Gastrocnemius medialis (tissue), 4 donors: ENCODE measurements at regions of chr4 and their contacts with region 1.

Region 1: DNA sequence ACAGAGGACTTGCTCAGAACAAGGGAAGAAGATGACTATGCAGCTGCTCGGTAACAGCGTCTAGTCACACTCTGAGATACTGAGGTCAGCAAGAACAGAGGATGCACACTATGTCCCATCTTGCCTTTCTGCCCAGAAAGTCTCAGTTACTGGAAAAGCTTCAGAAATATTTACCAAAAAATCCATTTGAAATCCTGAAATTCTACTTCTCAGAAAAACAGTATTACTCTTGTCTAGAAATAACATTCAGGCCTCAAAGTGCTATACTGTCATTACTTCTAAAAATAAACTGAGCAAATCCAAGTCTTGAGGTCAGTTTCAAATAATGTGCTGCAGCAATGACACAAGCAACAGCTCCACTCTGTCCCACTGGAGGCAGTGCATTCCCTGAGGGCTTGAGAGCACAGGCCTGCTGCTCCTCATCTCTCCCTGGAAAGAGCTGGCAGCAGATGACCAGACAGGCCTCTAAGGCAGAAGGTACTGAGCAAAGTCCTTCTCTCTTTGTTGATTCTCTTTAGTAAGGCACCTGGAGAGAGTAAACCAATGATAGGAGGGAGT is 76.9 kb downstream of the CAMK2D start:
- DNase-seq: peak; percentile 61 to 88
- ATAC-seq: peak; percentile 97 to 98
- H3K4me3 ChIP-seq: no peak overlapping the region
- H3K27ac ChIP-seq: peak overlapping the region; percentile 75 to 80 (median 78)
- H3K4me1 ChIP-seq: peaks cover 39 to 50% of the 10 kb centered on the region in 2 donors
- H3K27me3 ChIP-seq: no peaks in the 10 kb centered on the region
- CTCF ChIP-seq: peak; percentile 28 to 73 (median 58)
- POLR2A ChIP-seq: peak in 1 of 2 donors; percentile 20

Region 2: GRCh38 chr4:113179996-113180395 is 504.6 kb before region 1 on chr4:
- in situ Hi-C with region 1: no loop called
- intact Hi-C with region 1: no loop called
- DNase-seq: no peak
- ATAC-seq: peak; percentile 51 to 61
- H3K4me3 ChIP-seq: peak overlapping the region; percentile 9 to 24 (median 22)
- H3K27ac ChIP-seq: peak overlapping the region; percentile 77 to 85 (median 83)
- H3K4me1 ChIP-seq: peaks cover 46 to 64% of the 10 kb centered on the region in 2 donors
- H3K27me3 ChIP-seq: no peaks in the 10 kb centered on the region
- CTCF ChIP-seq: no peak
- POLR2A ChIP-seq: no peak

Region 3: DNA sequence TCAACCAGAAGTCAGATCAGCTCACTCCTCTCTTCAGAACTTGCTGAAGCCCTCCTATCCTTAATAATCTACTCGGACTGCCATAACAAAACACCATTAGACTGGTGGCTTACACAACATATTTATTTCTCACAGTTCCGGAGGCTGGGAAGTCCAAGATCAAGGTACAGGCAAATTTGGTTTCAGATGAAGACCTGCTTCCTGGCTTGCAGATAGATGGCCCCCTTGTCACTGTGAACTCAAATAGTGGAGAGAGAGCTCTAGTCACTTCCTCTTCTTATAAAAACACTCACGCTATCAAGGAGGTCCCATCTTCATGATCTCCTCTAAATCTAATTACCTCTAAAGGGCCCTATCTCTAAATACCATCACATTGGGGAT is 48.2 kb before region 1 on chr4:
- in situ Hi-C with region 1: no loop called
- intact Hi-C with region 1: loop called (anchors 1 kb)
- DNase-seq: no peak
- ATAC-seq: peak in 1 of 2 donors; percentile 47
- H3K4me3 ChIP-seq: no peak overlapping the region
- H3K27ac ChIP-seq: peak overlapping the region; percentile 30 to 62 (median 51)
- H3K4me1 ChIP-seq: peaks cover 58 to 79% of the 10 kb centered on the region in 2 donors
- H3K27me3 ChIP-seq: no peaks in the 10 kb centered on the region
- CTCF ChIP-seq: no peak
- POLR2A ChIP-seq: no peak

Region 4: DNA sequence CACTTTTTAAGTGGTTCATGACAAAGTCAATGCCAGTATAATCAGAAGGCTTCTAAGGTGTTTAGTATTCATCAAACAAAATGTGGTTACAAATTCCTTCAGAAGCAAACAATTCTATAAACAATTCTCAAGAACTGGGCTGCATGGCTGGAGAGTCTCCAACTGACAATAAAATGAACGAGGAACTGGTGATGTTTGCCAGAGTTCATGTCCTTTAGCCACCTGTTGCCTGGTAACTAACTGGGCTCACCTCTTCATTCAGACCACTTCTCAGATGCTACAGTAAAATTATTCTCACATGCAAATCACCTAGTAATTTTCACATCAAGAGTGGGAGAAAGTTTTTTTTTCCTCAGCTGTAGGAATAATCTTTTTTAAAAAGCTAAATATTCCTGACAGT is 23.6 kb after region 1 on chr4:
- in situ Hi-C with region 1: no loop called
- intact Hi-C with region 1: loop called (anchors 2 kb)
- DNase-seq: peak in 1 of 2 donors; percentile 28
- ATAC-seq: peak; percentile 36 to 63
- H3K4me3 ChIP-seq: no peak overlapping the region
- H3K27ac ChIP-seq: peak overlapping the region; percentile 74 to 85 (median 81)
- H3K4me1 ChIP-seq: peaks cover 43 to 67% of the 10 kb centered on the region in 2 donors
- H3K27me3 ChIP-seq: no peaks in the 10 kb centered on the region
- CTCF ChIP-seq: no peak
- POLR2A ChIP-seq: no peak